ENCODE measurements at regions of chr10 and their contacts with region 1.

Region 1: DNA sequence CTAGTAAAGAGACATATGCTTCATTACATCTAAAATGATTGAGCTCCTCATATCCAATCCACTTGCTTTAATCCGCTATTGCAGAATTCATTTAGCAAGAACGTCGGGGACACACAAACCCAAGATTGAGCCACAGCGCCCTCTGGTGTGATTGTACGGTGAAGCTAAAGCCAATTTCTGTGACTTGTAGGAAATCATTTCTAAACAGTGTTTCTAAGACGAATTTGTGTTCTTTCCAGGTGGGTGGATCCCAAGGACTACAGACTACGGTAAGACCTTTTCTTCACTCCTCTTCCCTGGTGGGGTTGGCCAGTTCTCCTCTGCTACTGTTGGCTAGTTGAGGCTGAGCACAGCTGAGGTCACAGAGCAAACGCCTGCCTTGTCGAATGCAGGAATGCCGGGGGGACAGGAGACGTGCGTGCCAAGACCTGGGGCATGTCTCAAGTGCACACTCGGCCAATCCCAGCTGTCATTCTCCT is 5.2 kb downstream of the DMBT1 start:
- DNase-seq: peak; percentile 24 to 61 (median 52)
- ATAC-seq: peak; percentile 48
- H3K4me3 ChIP-seq: no peak overlapping the region
- H3K4me3 Mint-ChIP-seq: no peak overlapping the region
- H3K27ac ChIP-seq: no peak overlapping the region
- H3K27ac Mint-ChIP-seq: no peak overlapping the region
- H3K4me1 ChIP-seq: no peaks in the 10 kb centered on the region
- H3K4me1 Mint-ChIP-seq: peaks cover 0 to 17% (median 8%) of the 10 kb centered on the region in 7 donors
- H3K27me3 ChIP-seq: peaks cover 0 to 3% of the 10 kb centered on the region in 2 donors
- H3K27me3 Mint-ChIP-seq: peaks cover 16 to 35% (median 27%) of the 10 kb centered on the region in 5 donors

Region 2: DNA sequence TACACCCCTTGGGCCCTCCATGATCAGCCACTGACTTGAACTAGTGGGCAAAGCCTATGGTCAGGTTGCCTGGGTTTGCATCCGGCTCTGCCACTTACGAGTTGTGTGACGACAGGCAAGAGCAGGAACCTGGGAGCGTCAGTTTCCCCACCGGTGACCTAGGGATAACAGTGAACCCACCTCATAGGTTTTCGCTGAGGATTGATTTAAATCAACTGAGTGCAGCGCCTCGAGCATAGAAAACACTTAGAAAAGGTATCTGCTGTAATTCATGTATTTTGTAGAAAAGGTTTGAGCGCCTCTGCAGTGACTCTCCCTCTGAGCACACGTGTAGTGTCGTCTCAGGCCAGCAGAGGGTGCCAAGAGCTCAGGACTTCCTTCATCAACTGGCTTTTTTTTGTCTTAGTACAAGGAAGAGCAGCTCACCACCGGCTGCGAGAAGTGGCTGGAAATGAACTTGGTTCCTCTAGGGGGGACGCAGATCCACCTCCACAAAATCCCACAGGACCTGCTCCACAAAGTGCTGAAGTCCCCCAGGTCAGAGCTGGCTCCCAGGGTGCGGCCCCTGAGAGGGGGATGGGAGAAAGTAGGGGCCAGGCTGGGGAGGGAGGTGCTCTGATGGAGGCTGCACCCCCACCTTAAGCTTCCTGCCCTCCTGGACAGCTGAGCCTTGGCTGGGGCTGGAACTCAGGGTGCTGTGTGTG is 267.0 kb before region 1 on chr10:
- CTCF ChIA-PET with region 1: interaction called, 28 read pairs
- POLR2A ChIA-PET with region 1: no interaction called
- intact Hi-C with region 1: loop called (anchors 1 kb)
- DNase-seq: peak; percentile 30 to 66 (median 53)
- ATAC-seq: peak; percentile 88
- H3K4me3 ChIP-seq: no peak overlapping the region
- H3K4me3 Mint-ChIP-seq: peak overlapping the region in 5 of 10 donors; percentile 27 to 63 (median 51)
- H3K27ac ChIP-seq: no peak overlapping the region
- H3K27ac Mint-ChIP-seq: no peak overlapping the region
- H3K4me1 ChIP-seq: no peaks in the 10 kb centered on the region
- H3K4me1 Mint-ChIP-seq: peaks cover 0 to 10% (median 8%) of the 10 kb centered on the region in 7 donors
- H3K27me3 ChIP-seq: no peaks in the 10 kb centered on the region
- H3K27me3 Mint-ChIP-seq: peaks cover 0 to 5% (median 0%) of the 10 kb centered on the region in 5 donors

Region 3: DNA sequence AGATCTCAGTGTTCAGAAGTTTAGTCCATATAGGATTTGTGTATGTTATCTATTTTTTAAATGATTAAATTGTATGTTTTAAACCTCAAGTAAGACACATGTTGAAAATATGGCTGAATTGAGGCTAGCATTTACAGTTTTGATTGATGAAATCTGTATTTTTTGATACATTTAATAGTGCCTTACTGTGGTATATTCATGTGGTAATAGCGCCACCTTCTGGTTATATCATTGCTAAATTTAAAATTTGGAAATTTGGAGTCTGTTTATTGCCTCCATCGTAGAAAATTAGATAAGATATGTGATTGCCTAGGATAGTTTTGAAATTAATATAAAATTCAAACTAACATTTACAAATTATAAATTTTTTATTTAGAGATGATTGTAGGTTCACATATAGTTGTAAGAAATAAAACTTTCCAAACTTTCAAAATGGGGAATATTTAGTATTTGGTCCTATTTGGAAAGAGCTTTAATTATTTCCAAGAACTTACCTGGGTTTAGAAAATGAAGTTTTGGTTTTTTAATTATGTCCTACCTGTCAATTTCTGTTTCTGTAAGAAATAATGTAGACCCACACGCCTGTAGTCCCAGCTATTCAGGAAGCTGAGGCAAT is 130.4 kb before region 1 on chr10:
- CTCF ChIA-PET with region 1: interaction called, 28 read pairs
- POLR2A ChIA-PET with region 1: no interaction called
- intact Hi-C with region 1: loop called (anchors 1 to 10 kb)
- DNase-seq: peak in 7 of 9 donors; percentile 33 to 73 (median 62)
- ATAC-seq: peak; percentile 70
- H3K4me3 ChIP-seq: no peak overlapping the region
- H3K4me3 Mint-ChIP-seq: no peak overlapping the region
- H3K27ac ChIP-seq: no peak overlapping the region
- H3K27ac Mint-ChIP-seq: peak overlapping the region in 5 of 9 donors; percentile 32 to 81 (median 53)
- H3K4me1 ChIP-seq: no peaks in the 10 kb centered on the region
- H3K4me1 Mint-ChIP-seq: peaks cover 0 to 14% (median 8%) of the 10 kb centered on the region in 7 donors
- H3K27me3 ChIP-seq: no peaks in the 10 kb centered on the region
- H3K27me3 Mint-ChIP-seq: no peaks in the 10 kb centered on the region

Region 4: GRCh38 chr10:122510326-122510725 is 55.4 kb before region 1 on chr10:
- CTCF ChIA-PET with region 1: interaction called, 8 read pairs
- POLR2A ChIA-PET with region 1: no interaction called
- intact Hi-C with region 1: loop called (anchors 1 to 5 kb)
- DNase-seq: no peak
- ATAC-seq: no peak
- H3K4me3 ChIP-seq: no peak overlapping the region
- H3K4me3 Mint-ChIP-seq: no peak overlapping the region
- H3K27ac ChIP-seq: no peak overlapping the region
- H3K27ac Mint-ChIP-seq: no peak overlapping the region
- H3K4me1 ChIP-seq: peaks cover 0 to 20% of the 10 kb centered on the region in 2 donors
- H3K4me1 Mint-ChIP-seq: peaks cover 0 to 11% (median 5%) of the 10 kb centered on the region in 7 donors
- H3K27me3 ChIP-seq: no peaks in the 10 kb centered on the region
- H3K27me3 Mint-ChIP-seq: peaks cover 0 to 4% (median 0%) of the 10 kb centered on the region in 5 donors

Region 5: GRCh38 chr10:122703439-122704118 is 137.8 kb after region 1 on chr10:
- CTCF ChIA-PET with region 1: no interaction called
- POLR2A ChIA-PET with region 1: no interaction called
- intact Hi-C with region 1: loop called in 1 of 2 experiments (anchors 1 kb)
- DNase-seq: peak; percentile 2 to 47 (median 33)
- ATAC-seq: peak; percentile 57
- H3K4me3 ChIP-seq: no peak overlapping the region
- H3K4me3 Mint-ChIP-seq: no peak overlapping the region
- H3K27ac ChIP-seq: no peak overlapping the region
- H3K27ac Mint-ChIP-seq: no peak overlapping the region
- H3K4me1 ChIP-seq: peaks cover 0 to 5% of the 10 kb centered on the region in 2 donors
- H3K4me1 Mint-ChIP-seq: peaks cover 0 to 8% (median 0%) of the 10 kb centered on the region in 7 donors
- H3K27me3 ChIP-seq: no peaks in the 10 kb centered on the region
- H3K27me3 Mint-ChIP-seq: peaks cover 0 to 20% (median 5%) of the 10 kb centered on the region in 5 donors